T-cell (primary cell): ENCODE measurements at regions of chr10 and their contacts with region 1.

Region 1: DNA sequence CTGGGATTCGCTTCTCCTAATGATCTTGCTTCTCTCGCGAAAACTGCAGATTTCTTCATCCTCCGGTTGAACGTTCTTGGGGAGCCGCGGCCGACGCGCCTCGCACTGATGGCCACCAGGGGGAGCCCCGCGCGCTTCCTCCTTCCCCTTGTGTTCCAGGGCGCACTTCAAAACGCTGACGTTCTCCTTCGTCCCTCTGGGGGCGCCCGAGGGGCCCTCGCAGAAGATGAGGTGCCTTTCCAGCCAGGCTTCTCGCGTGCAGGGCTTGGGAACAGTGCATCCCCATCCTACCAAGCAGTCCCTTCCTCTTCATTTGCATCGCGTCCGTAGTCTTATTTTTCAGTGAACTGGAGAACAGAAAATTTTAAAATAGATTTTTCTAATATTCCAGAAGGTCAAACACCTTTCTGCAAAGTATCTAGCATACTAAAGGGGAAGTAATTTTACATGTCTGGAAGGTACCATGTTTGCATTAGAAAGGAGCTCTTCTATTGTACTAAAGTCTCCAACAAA is 22.5 kb downstream of the GSTO2 start:
- DNase-seq: peak; percentile 70 to 95 (median 85)
- ATAC-seq: peak; percentile 98 to 100 (median 100)
- H3K4me3 ChIP-seq: no peak overlapping the region
- H3K4me3 Mint-ChIP-seq: no peak overlapping the region
- H3K27ac ChIP-seq: no peak overlapping the region
- H3K27ac Mint-ChIP-seq: peak overlapping the region in 1 of 2 donors; percentile 28
- H3K4me1 ChIP-seq: peaks cover 0 to 7% of the 10 kb centered on the region in 2 experiments
- H3K4me1 Mint-ChIP-seq: peaks cover 5 to 7% (median 5%) of the 10 kb centered on the region in 3 donors
- H3K27me3 ChIP-seq: peaks cover 0 to 19% of the 10 kb centered on the region in 2 experiments
- H3K27me3 Mint-ChIP-seq: peaks cover 14 to 16% of the 10 kb centered on the region in 2 donors

Region 2: GRCh38 chr10:104274762-104275721 is 16.5 kb before region 1 on chr10:
- CTCF ChIA-PET with region 1: interaction called, 8 to 46 read pairs
- POLR2A ChIA-PET with region 1: interaction called, 3 read pairs
- DNase-seq: peak in 25 of 35 experiments; percentile 14 to 67 (median 32)
- ATAC-seq: peak; percentile 77 to 90 (median 85)
- H3K4me3 ChIP-seq: peak overlapping the region in 1 of 2 donors; percentile 9
- H3K4me3 Mint-ChIP-seq: peak overlapping the region in 1 of 3 donors; percentile 37
- H3K27ac ChIP-seq: no peak overlapping the region
- H3K27ac Mint-ChIP-seq: no peak overlapping the region
- H3K4me1 ChIP-seq: peaks cover 0 to 9% of the 10 kb centered on the region in 2 experiments
- H3K4me1 Mint-ChIP-seq: peaks cover 4% of the 10 kb centered on the region in 3 donors
- H3K27me3 ChIP-seq: peaks cover 0 to 22% of the 10 kb centered on the region in 2 experiments
- H3K27me3 Mint-ChIP-seq: peaks cover 5 to 11% of the 10 kb centered on the region in 2 donors

Region 3: DNA sequence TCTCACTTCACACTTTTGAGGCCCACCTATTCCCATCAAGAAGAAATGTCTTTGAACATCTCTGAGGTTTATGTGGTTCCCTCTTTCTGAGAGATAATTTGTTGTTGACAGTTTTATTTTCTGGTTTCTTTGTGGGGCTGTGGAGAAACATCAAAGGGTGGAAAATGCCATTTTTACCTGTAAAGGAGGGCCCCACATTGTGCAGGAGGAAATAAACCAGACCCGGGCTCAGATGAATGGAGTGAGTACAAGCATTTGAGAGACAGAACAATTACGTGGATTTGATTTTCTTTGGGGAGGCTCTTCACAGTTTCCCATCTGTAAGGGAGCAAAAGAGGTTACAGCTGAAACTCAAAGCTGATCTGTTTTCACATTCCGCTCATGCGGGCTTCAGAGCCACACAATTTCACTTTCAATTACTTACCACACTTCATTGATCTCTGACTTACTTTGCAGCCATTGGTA is 17.0 kb after region 1 on chr10:
- CTCF ChIA-PET with region 1: interaction called, 19 to 67 read pairs
- POLR2A ChIA-PET with region 1: interaction called in 1 of 2 experiments, 3 read pairs
- DNase-seq: peak in 10 of 35 experiments; percentile 23 to 58 (median 36)
- ATAC-seq: peak; percentile 59 to 72 (median 67)
- H3K4me3 ChIP-seq: no peak overlapping the region
- H3K4me3 Mint-ChIP-seq: peak overlapping the region; percentile 52 to 65 (median 53)
- H3K27ac ChIP-seq: peak overlapping the region; percentile 21
- H3K27ac Mint-ChIP-seq: peak overlapping the region; percentile 75 to 83
- H3K4me1 ChIP-seq: peaks cover 61 to 72% of the 10 kb centered on the region in 2 experiments
- H3K4me1 Mint-ChIP-seq: peaks cover 81 to 84% (median 83%) of the 10 kb centered on the region in 3 donors
- H3K27me3 ChIP-seq: no peaks in the 10 kb centered on the region
- H3K27me3 Mint-ChIP-seq: no peaks in the 10 kb centered on the region

Region 4: DNA sequence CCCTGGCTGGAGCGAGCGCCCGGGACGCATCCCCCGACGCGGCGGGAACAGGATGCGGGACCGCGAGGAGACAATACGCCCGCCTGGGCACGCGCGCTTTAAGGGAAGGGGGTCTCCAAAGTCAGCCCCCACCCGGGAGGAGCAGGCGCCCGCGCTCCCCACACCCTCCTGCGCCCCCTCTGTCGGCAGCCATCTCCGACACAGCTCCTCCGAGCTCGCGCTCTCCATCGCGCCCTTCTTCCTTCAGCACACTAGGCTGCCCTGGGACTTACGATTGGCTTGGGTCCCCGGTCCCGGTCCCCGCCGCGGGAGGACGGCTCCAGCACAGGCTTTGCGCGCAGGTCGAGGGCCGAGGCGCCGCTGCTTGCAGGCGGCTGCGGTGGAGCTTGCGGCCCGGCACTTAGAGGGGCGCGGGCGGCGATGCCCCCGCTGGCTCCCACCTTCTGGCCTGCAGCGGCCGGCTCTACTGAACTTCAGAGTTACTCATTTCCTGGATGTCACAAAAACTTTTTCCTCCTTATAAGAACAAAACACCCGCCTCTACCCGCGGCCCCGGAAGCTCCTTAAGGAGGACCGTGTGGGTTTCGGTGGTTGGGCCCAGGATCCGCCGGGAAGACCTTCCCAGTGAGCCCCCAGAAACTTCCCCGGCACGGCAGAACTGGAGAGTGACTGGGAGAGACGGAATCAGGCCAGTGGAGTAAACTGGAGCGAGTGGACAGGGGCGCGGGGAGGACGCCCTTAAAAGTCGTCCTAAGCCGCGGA is 46.7 kb after region 1 on chr10 and contains the start of gene ITPRIP:
- CTCF ChIA-PET with region 1: interaction called, 5 to 10 read pairs
- POLR2A ChIA-PET with region 1: interaction called in 1 of 2 experiments, 4 read pairs
- DNase-seq: peak; percentile 50 to 83 (median 65)
- ATAC-seq: peak; percentile 83 to 87 (median 85)
- H3K4me3 ChIP-seq: peak within 1 kb of the TSS; percentile 93 to 97
- H3K4me3 Mint-ChIP-seq: peak within 1 kb of the TSS; percentile 88 to 99 (median 90)
- H3K27ac ChIP-seq: peak within 1 kb of the TSS; percentile 88
- H3K27ac Mint-ChIP-seq: peak within 1 kb of the TSS; percentile 97 to 100
- H3K4me1 ChIP-seq: peaks cover 36 to 46% of the 10 kb centered on the region in 2 experiments
- H3K4me1 Mint-ChIP-seq: peaks cover 49 to 54% (median 50%) of the 10 kb centered on the region in 3 donors
- H3K27me3 ChIP-seq: no peaks in the 10 kb centered on the region
- H3K27me3 Mint-ChIP-seq: no peaks in the 10 kb centered on the region
- total RNA-seq, gene ITPRIP: 16.9 to 98.5 (median 25.0) TPM

Region 5: GRCh38 chr10:104353325-104354048 is 62.0 kb after region 1 on chr10 and contains the start of gene CFAP58:
- CTCF ChIA-PET with region 1: interaction called, 85 to 167 read pairs
- POLR2A ChIA-PET with region 1: interaction called in 1 of 2 experiments, 15 read pairs
- DNase-seq: peak; percentile 74 to 96 (median 83)
- ATAC-seq: peak; percentile 84 to 91 (median 90)
- H3K4me3 ChIP-seq: peak within 1 kb of the TSS; percentile 46 to 54
- H3K4me3 Mint-ChIP-seq: peak within 1 kb of the TSS in 1 of 3 donors; percentile 28
- H3K27ac ChIP-seq: peak within 1 kb of the TSS; percentile 42
- H3K27ac Mint-ChIP-seq: peak within 1 kb of the TSS in 1 of 2 donors; percentile 68
- H3K4me1 ChIP-seq: peaks cover 14 to 27% of the 10 kb centered on the region in 2 experiments
- H3K4me1 Mint-ChIP-seq: peaks cover 0 to 6% (median 0%) of the 10 kb centered on the region in 3 donors
- H3K27me3 ChIP-seq: no peaks in the 10 kb centered on the region
- H3K27me3 Mint-ChIP-seq: no peaks in the 10 kb centered on the region
- total RNA-seq, gene CFAP58: not detected